A549 (cell line): ENCODE measurements at regions of chr9 and their contacts with region 1.

Region 1: GRCh38 chr9:134443168-134444037 is 117.1 kb downstream of the RXRA start:
- DNase-seq: peak; percentile 92 to 98
- ATAC-seq: peak; percentile 91
- H3K4me3 ChIP-seq: no peak overlapping the region
- H3K27ac ChIP-seq: peak overlapping the region; percentile 72 to 82
- H3K4me1 ChIP-seq: peaks cover 13% of the 10 kb centered on the region
- CTCF ChIP-seq: peak; percentile 96
- EP300 ChIP-seq: no peak
- POLR2A ChIP-seq: no peak
- RAD21 ChIP-seq: peak; percentile 98 to 100

Region 2: GRCh38 chr9:134171316-134172197 is 271.8 kb before region 1 on chr9:
- CTCF ChIA-PET with region 1: interaction called, 178 read pairs
- POLR2A ChIA-PET with region 1: interaction called, 5 read pairs
- DNase-seq: no peak
- ATAC-seq: no peak
- H3K4me3 ChIP-seq: no peak overlapping the region
- H3K27ac ChIP-seq: peak overlapping the region in 1 of 2 experiments; percentile 5; a peak in 1 of 6 replicates
- H3K4me1 ChIP-seq: peaks cover 20% of the 10 kb centered on the region
- CTCF ChIP-seq: no peak
- EP300 ChIP-seq: no peak
- POLR2A ChIP-seq: no peak
- RAD21 ChIP-seq: no peak

Region 3: GRCh38 chr9:134271338-134272301 is 171.8 kb before region 1 on chr9:
- CTCF ChIA-PET with region 1: interaction called, 14 read pairs
- POLR2A ChIA-PET with region 1: no interaction called
- DNase-seq: no peak
- ATAC-seq: no peak
- H3K4me3 ChIP-seq: no peak overlapping the region
- H3K27ac ChIP-seq: no peak overlapping the region
- H3K4me1 ChIP-seq: no peaks in the 10 kb centered on the region
- CTCF ChIP-seq: no peak
- EP300 ChIP-seq: no peak
- POLR2A ChIP-seq: no peak
- RAD21 ChIP-seq: no peak

Region 4: DNA sequence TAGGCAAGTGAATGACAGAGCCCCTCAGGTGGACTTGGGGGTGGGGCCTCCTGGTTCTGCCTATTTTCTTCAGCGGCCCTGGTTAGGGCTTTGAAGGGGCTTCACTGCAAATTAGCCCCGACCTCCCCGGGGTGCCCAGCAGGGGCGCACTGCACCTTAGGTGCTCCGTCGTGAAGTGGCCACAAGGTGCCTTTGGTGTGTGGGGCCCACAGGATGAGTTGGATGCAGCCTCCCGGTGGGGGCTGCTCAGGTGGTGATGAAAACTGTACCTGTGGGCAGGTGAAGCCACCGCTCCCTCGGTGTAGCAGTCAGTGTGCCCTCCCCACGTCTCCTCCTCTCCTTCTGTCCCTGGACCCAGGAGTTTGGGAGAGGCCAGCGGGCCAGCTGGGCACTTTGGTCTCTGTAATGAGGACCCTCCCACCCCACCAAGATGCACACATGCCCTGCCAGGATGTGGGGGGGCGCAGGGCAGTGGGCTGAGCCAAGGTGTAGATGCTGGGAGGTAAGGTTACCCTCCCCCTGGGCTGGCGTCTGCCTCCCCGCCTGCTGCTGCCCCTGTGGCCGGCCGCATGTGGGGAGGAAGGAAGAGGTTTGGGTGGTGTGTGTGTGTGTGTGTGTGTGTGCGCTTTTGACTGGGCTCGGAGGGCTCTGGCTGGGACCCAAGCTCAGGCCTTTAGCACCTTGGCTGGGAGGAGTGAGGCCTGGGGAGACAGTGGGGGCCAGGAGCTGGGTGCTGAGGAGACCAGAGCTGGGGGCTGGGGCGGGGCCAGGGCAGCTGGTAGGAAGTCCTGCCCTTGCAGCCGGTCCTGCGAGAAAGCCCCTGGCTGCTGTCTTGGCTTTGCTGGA is 61.5 kb before region 1 on chr9:
- CTCF ChIA-PET with region 1: interaction called, 32 read pairs
- POLR2A ChIA-PET with region 1: no interaction called
- DNase-seq: no peak
- ATAC-seq: peak in 1 of 2 experiments; percentile 10; a peak in 1 of 6 replicates
- H3K4me3 ChIP-seq: no peak overlapping the region
- H3K27ac ChIP-seq: peak overlapping the region; percentile 93 to 97
- H3K4me1 ChIP-seq: peaks cover 95% of the 10 kb centered on the region
- CTCF ChIP-seq: peak; percentile 25
- EP300 ChIP-seq: no peak
- POLR2A ChIP-seq: no peak
- RAD21 ChIP-seq: no peak

Region 5: DNA sequence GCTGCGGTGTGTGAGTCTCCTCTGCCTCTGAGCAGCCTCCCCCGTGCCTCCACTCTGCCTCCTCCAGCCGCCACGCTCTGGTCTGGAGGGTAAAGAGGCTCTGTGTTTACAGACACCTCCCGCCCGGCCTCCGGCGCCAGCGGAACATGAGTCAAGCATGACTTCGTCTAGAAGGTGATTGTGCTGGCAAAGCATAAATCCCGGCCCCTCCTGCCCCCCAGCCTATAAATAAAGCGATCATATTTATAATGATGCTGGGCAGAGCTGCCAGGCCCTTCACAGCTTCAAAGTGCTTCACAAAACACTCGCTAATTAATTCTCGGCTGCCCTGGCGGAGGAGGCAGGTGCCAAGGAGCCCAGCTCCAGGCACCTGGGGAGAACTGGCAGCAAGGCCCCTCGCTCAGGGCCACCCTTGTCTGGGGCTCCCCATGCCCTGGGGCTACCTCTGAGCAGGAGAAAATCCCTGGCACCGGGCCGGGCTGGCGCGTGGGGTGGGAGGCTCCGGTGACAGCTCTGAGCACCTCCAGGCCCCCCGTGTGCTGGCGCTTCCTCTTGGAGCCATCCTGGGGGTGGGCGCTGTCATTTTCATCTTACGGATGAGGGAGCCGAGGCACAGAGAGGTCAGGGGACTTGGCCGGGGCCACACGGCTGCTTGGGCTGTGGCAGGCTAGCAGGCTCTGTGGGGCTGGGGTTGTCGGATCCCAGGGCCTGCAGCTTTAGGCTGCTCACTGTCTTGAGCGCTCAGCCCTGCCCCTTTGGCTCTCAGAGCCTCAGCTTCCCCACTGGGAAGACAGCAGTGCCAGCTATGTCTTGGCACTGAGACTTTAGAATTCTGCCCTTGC is 29.3 kb before region 1 on chr9:
- CTCF ChIA-PET with region 1: interaction called, 20 read pairs
- POLR2A ChIA-PET with region 1: no interaction called
- DNase-seq: peak; percentile 77 to 87
- ATAC-seq: peak; percentile 54 to 84
- H3K4me3 ChIP-seq: no peak overlapping the region
- H3K27ac ChIP-seq: peak overlapping the region; percentile 80 to 100
- H3K4me1 ChIP-seq: peaks cover 63% of the 10 kb centered on the region
- CTCF ChIP-seq: no peak
- EP300 ChIP-seq: no peak
- POLR2A ChIP-seq: no peak
- RAD21 ChIP-seq: peak; percentile 5 to 21; a peak in 2 of 5 replicates

Region 6: GRCh38 chr9:134641173-134641985 is 198.0 kb after region 1 on chr9 and contains the start of gene COL5A1:
- CTCF ChIA-PET with region 1: interaction called, 52 read pairs
- POLR2A ChIA-PET with region 1: no interaction called
- DNase-seq: peak; percentile 84
- ATAC-seq: peak; percentile 74 to 90
- H3K4me3 ChIP-seq: peak within 1 kb of the TSS; percentile 73
- H3K27ac ChIP-seq: peak within 1 kb of the TSS; percentile 78 to 93
- H3K4me1 ChIP-seq: peaks cover 55% of the 10 kb centered on the region
- CTCF ChIP-seq: no peak
- EP300 ChIP-seq: no peak
- POLR2A ChIP-seq: peak; percentile 72
- RAD21 ChIP-seq: 0 out of 5 replicates have a peak, but pooled peaks of 1 of the 2 experiments have one; percentile 10
- polyA plus RNA-seq, gene COL5A1: 15.2 and 16.1 TPM in 2 replicates